GM13976 (cell line): ENCODE measurements at regions of chr3 and their contacts with region 1.

Region 1: DNA sequence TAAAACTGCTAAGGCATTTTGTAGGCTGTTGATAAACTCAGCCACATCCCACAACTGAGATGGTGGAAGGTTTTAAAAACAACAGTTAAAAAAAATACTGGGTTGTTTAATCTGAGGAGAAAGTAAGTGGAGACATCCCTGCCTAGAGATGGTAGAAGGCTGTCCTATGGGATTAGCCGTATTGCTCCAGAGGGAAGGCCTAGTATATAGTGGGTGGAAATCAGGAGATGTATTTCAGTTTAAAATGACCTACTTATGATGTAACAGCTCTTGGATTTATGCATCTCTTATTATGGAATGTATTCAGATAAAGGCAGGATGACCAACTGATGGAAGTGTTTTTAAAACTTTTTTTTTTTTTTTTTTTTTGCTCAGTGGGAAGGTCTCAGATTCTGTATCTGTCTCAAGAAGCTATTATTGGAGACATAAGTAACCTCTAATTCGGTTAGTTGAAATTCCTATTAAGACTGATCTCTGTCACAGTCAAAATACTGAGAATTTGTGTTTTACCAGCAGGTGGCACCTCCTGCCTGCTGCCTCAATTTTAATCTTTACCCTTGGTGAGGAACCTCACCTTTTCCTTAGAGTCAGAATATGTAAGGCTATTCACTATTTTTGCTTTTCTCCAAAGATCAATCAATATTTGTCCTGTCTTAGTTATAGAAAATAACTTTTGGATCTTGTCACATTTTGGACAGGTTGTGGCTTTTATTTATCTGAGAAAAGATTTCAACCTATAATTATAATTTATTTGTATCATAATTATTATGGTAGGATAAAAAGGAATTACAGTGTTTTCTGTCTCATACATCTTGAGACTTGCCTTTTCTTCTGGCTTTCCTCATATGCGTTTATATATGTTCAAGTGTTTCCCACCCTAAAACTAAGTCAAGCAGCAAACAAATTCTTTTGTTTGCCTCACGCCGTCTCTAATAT is 63.0 kb downstream of the VPS8 start:
- DNase-seq: peak; percentile 36
- CTCF ChIP-seq: peak; percentile 45

Region 2: DNA sequence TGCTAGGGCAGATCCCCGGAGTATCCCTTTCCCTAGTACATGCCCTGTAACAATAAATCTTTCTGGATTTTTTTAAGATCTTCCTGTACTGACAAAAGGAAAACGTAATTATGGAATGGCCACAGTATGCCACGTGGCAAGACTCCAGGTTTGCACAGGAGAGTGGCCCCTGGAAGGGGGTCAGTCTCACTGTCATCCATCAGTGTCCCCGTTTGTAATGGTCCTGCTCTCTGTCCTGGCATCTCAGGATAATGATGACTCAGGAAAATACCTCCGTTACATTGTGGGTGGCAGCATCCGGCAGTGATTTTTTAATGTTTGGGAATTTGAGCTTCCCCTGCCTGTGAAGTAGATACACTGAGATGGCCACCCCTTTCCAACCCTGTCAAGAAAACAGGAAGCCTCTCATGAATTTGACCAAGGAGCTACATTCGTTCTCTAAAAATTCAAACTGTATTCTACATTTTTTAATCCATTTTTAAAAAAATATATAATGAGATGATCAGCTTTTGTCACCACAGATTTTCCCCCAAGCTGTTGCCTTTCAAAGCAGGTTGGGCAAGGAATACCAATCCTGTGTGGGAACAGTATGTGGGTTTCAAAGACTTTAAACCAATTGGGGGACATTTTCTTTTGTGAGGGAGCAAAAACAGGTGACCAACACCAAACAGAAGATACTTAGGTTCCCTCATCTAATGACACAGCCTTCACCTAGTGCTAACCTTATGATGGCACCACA is 167.5 kb after region 1 on chr3:
- in situ Hi-C with region 1: no loop called
- DNase-seq: no peak
- CTCF ChIP-seq: no peak

Region 3: GRCh38 chr3:185176750-185177359 is 301.9 kb after region 1 on chr3:
- in situ Hi-C with region 1: loop called (anchors 25 kb)
- DNase-seq: peak; percentile 41
- CTCF ChIP-seq: peak; percentile 48